ENCODE measurements at regions of chr14 and their contacts with region 1.

Region 1: DNA sequence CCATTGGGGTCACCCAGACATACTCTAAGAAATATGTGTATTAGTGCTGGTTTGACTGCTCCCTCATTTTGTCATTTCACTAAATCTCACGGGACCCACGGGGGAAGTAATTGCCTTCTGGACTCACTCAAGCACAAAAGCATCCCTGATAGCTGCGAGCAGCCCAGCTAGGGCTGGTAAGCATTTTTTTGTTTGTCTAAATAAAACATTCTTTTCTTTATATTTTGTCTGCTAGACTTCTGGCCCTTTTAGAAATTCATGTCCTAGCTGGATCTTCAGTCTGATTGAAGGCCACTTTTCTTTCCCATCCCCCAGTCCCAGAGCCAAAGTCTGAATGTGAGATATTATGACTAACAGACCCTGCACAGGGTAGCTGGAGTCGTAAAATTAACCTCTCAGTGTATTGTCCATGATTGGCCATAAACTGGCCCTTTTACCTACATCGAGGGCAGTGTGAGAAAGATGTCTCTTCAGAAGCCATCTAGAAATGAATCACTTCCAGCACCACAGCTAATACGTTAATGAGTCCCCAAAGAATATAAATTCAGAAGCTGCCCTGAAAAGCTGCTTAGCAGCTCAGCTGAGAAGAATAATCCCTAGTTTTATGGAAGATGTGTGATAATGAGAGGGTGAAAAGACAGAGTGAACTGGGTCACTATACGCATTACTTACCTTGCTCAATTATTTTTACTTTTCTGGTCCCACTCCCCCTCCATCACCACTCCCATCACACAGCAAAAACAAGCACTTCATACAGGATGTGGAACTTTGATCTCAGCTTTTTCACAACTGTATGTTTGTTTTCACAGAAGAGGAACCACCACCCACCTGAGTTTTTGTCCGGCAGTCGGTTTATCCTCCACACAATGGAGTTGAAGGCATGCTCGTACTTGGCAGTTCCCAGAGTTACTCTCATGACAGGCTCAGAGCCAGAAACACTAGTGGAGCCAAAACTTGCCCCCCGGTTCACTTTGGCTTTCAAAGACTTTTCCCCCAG is 55.6 kb upstream of the GTF2A1 start:
- DNase-seq: no peak
- H3K4me3 ChIP-seq: no peak overlapping the region
- H3K27ac ChIP-seq: no peak overlapping the region
- H3K4me1 ChIP-seq: no peaks in the 10 kb centered on the region
- H3K27me3 ChIP-seq: no peaks in the 10 kb centered on the region
- CTCF ChIP-seq: no peak
- EP300 ChIP-seq: no peak
- POLR2A ChIP-seq: no peak

Region 2: DNA sequence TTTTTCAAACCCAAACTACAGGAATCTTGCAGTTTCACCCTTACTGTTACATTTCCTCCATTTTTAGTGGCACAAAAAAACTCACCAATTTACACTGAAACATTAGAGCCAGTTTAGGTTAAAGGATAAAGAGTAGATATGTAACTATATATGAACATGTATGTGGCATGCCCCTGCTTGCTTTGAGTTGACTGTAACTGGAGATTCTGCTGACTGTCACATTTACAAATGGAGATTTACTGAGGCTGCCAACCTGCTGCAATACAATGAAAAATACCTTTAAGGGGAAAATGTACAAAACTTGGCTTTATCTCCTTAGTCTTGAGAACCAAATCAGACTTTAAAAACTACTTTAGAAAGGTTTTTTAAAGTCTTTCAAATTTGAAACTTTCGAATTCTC is 95.4 kb after region 1 on chr14:
- in situ Hi-C with region 1: no loop called
- intact Hi-C with region 1: no loop called
- DNase-seq: no peak
- H3K4me3 ChIP-seq: no peak overlapping the region
- H3K27ac ChIP-seq: no peak overlapping the region
- H3K4me1 ChIP-seq: no peaks in the 10 kb centered on the region
- H3K27me3 ChIP-seq: no peaks in the 10 kb centered on the region
- CTCF ChIP-seq: no peak
- EP300 ChIP-seq: no peak
- POLR2A ChIP-seq: no peak

Region 3: DNA sequence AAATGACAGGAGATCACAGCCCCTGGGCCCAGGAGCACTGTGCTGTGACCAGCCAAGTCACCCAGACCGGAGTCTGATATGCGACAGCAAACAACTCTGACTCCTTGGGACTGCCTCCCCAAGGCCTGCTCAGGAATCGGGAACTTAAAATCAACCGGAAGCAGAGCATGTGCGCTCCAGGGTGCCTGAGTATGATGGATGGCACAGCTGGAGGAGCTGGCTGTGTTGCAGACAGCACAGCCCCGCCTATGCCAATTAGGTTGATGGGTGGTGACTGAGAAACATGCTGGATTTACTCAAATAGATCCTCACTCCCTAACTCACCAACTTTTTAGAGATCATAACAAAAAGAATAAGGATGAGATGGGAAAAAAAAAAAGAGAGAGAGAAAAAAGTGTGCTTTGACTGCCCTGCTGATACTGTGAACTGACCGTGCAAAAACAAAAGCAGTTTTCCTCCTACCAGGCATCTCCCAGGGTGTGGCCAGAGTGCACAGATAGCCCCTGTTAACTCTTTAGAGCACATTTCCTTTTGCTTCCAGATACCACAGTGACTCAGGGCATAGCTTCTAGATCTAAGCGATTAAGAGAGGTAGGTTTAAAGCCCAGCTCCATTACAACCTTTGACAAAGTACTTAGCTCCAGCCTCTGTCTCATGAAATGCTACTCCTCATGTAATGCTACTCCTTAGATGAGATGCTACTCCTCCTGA is 151.1 kb after region 1 on chr14:
- in situ Hi-C with region 1: no loop called
- intact Hi-C with region 1: no loop called
- DNase-seq: peak; percentile 26
- H3K4me3 ChIP-seq: no peak overlapping the region
- H3K27ac ChIP-seq: no peak overlapping the region
- H3K4me1 ChIP-seq: peaks cover 0 to 8% (median 0%) of the 10 kb centered on the region in 4 donors
- H3K27me3 ChIP-seq: no peaks in the 10 kb centered on the region
- CTCF ChIP-seq: no peak
- EP300 ChIP-seq: no peak
- POLR2A ChIP-seq: no peak

Region 4: GRCh38 chr14:81453166-81453766 is 176.9 kb after region 1 on chr14:
- in situ Hi-C with region 1: loop called in 3 of 4 experiments (anchors 5 to 10 kb)
- intact Hi-C with region 1: loop called (anchors 5 kb)
- DNase-seq: peak; percentile 62
- H3K4me3 ChIP-seq: no peak overlapping the region
- H3K27ac ChIP-seq: no peak overlapping the region
- H3K4me1 ChIP-seq: peaks cover 0 to 23% (median 5%) of the 10 kb centered on the region in 4 donors
- H3K27me3 ChIP-seq: no peaks in the 10 kb centered on the region
- CTCF ChIP-seq: peak; percentile 88 to 92 (median 91)
- EP300 ChIP-seq: no peak
- POLR2A ChIP-seq: no peak

Region 5: GRCh38 chr14:81464247-81465002 is 188.1 kb after region 1 on chr14:
- in situ Hi-C with region 1: loop called in 1 of 4 experiments (anchors 10 kb)
- intact Hi-C with region 1: no loop called
- DNase-seq: peak; percentile 54
- H3K4me3 ChIP-seq: peak overlapping the region; percentile 20 to 48 (median 26)
- H3K27ac ChIP-seq: peak overlapping the region; percentile 29 to 71 (median 59)
- H3K4me1 ChIP-seq: peaks cover 0 to 6% (median 0%) of the 10 kb centered on the region in 4 donors
- H3K27me3 ChIP-seq: no peaks in the 10 kb centered on the region
- CTCF ChIP-seq: peak; percentile 90 to 96 (median 94)
- EP300 ChIP-seq: no peak
- POLR2A ChIP-seq: no peak